PC-3 (cell line): ENCODE measurements at regions of chr18 and their contacts with region 1.

Region 1: DNA sequence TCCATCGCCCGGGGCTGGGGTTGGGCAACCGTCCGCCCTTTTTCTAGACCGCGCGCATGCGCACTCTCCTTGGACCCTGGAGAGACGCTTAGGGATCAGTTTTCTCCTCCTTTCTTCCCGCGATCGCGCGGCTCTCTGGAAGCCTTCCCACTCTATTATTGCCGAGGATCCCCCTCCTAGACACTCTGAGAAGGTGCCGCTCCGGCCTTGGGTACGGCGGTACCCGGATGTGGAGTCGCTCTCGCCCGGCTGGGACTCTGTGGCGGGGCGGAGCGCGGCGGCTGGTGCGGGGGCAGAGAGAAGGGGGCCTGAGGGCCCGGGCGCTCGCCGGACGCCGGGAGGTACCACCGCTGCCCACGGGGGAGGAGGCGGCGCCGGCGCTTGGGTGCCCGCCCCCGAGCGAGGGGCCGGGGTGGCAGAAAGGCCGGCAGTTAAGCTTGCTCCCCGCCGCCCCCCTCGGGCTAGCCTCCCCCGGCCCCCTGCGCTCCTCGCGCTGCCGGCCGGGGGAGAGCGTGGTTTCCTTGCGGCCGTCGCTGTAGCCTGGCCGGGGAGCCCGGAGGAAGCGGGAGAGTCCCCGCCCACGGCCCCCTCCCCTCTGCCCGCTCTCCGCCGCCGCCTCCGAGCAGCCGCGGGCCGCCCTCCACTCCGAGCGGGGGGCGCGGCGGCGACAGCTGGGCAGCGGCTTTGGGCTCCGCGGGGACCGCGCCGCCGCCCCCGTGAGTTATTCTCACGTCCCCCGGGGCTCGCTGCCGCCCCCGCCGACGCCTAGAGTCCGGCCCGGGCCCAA is at the start of gene MIB1:
- DNase-seq: no peak
- ATAC-seq: peak; percentile 66
- H3K4me3 ChIP-seq: peak within 1 kb of the TSS; percentile 88
- H3K27ac ChIP-seq: peak within 1 kb of the TSS; percentile 85
- H3K4me1 ChIP-seq: peaks cover 27% of the 10 kb centered on the region
- H3K27me3 ChIP-seq: no peaks in the 10 kb centered on the region
- CTCF ChIP-seq: no peak
- total RNA-seq, gene MIB1: 25.1 and 26.3 TPM in 2 replicates

Region 2: GRCh38 chr18:21526463-21526862 is 214.5 kb before region 1 on chr18:
- CTCF ChIA-PET with region 1: no interaction called
- POLR2A ChIA-PET with region 1: no interaction called
- intact Hi-C with region 1: no loop called
- DNase-seq: no peak
- ATAC-seq: no peak
- H3K4me3 ChIP-seq: no peak overlapping the region
- H3K27ac ChIP-seq: no peak overlapping the region
- H3K4me1 ChIP-seq: no peaks in the 10 kb centered on the region
- H3K27me3 ChIP-seq: no peaks in the 10 kb centered on the region
- CTCF ChIP-seq: no peak

Region 3: DNA sequence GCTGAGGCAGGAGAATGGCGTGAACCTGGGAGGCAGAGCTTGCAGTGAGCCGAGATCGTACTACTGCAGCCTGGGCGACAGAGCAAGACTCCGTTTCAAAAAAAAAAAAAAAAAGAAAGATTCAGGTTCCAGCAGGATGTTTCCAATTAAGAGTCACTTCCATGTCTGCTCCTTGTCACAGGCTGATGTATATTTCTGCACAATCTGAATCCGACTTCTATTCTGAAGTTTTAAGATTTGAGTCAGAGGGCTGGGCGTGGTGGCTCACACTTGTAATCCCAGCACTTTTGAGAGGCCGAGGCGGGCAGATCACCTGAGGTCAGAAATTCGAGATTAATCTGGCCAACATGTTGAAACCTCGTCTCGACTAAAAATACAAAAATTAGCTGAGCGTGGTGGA is 104.1 kb before region 1 on chr18:
- CTCF ChIA-PET with region 1: interaction called, 3 read pairs
- POLR2A ChIA-PET with region 1: interaction called, 14 read pairs
- intact Hi-C with region 1: loop called (anchors 2 kb)
- DNase-seq: peak; percentile 55
- ATAC-seq: peak; percentile 6; the same call in 1 of the 2 replicates
- H3K4me3 ChIP-seq: no peak overlapping the region
- H3K27ac ChIP-seq: peak overlapping the region; percentile 86
- H3K4me1 ChIP-seq: peaks cover 35% of the 10 kb centered on the region
- H3K27me3 ChIP-seq: no peaks in the 10 kb centered on the region
- CTCF ChIP-seq: no peak

Region 4: GRCh38 chr18:21786526-21786925 is 45.6 kb after region 1 on chr18:
- CTCF ChIA-PET with region 1: no interaction called
- POLR2A ChIA-PET with region 1: no interaction called
- intact Hi-C with region 1: no loop called
- DNase-seq: no peak
- ATAC-seq: no peak
- H3K4me3 ChIP-seq: no peak overlapping the region
- H3K27ac ChIP-seq: no peak overlapping the region
- H3K4me1 ChIP-seq: no peaks in the 10 kb centered on the region
- H3K27me3 ChIP-seq: no peaks in the 10 kb centered on the region
- CTCF ChIP-seq: no peak